ENCODE measurements at regions of chr12 and their contacts with region 1.

Region 1: DNA sequence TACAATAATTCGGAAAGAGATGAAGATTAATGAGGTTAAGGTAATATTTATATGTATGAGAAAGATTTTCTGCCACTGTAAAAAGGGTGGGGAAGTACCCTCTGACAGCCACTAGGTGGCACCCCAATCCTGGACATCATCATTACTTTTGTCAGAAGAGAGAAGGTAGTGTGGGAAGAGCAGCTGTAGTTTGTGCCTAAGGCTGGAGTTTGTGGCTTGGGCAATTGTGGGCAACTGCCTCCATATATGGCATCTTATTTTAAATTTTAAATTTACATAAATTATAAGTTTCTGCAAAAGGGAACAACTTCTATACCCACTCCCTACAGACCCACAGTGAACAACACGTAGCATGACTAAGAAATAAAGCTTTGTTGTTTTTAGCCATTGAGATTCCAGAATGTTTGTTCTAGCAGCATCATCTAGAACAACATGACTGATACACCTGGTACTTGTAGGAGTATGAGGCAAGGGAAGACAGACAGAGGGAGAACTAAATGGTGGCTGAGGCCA is 34.4 kb upstream of the SYCP3 start:
- DNase-seq: no peak
- H3K4me3 ChIP-seq: no peak overlapping the region
- H3K27ac ChIP-seq: no peak overlapping the region
- H3K4me1 ChIP-seq: no peaks in the 10 kb centered on the region
- H3K27me3 ChIP-seq: no peaks in the 10 kb centered on the region
- CTCF ChIP-seq: peak; percentile 85 to 94 (median 85)
- POLR2A ChIP-seq: no peak

Region 2: GRCh38 chr12:101839324-101840283 is 65.9 kb after region 1 on chr12:
- intact Hi-C with region 1: loop called (anchors 5 kb)
- DNase-seq: no peak
- H3K4me3 ChIP-seq: no peak overlapping the region
- H3K27ac ChIP-seq: no peak overlapping the region
- H3K4me1 ChIP-seq: no peaks in the 10 kb centered on the region
- H3K27me3 ChIP-seq: no peaks in the 10 kb centered on the region
- CTCF ChIP-seq: peak; percentile 57 to 79 (median 70)
- POLR2A ChIP-seq: no peak

Region 3: DNA sequence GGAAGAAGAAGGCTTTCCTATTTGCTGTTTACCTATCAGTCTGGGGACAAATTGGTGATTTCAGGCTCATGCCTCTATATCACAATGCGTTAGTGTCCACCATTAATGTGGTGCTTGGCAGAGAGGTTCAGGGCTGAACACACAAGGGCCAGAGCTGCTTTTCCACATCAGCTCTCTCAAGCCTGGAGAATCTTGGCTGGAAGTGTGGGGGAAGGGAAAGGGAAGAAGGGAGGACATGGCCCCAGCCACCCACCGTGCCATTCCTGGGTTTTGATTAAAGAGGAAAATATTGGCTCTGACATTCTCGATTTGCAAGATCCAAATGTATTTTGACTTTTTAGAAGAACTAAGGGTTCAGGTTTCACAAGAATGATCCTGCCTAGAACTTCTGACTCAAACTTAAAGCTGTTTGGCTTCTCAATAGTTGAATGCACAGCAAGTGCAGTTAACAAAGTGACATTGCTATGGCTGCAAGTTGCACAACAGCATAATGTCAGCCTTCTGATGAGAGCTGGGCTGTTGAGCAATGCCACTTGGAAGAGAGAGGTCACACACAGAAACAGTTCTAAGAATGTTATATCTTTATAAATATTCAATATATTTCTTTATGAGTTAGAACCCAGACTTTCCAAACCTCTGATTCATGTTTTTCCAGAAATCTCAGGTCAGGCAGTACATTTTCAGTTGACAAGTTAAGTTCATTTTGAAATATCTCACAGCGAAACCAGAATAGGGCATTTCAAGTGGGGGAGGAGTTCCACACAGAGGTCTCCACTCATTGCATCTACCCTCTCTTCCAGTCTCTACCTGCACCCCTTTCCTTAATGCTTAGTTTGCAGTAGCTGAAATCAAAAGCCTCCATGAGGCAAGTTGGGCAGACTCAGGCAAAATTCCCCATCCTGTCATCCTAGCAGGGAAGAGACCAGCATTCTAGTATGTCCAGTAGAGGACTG is 681.4 kb after region 1 on chr12:
- intact Hi-C with region 1: no loop called
- DNase-seq: no peak
- H3K4me3 ChIP-seq: no peak overlapping the region
- H3K27ac ChIP-seq: peak overlapping the region; percentile 48
- H3K4me1 ChIP-seq: peaks cover 19% of the 10 kb centered on the region
- H3K27me3 ChIP-seq: no peaks in the 10 kb centered on the region
- CTCF ChIP-seq: no peak
- POLR2A ChIP-seq: no peak